Activated CD8-positive, alpha-beta memory T cell treated with anti-CD3 and anti-CD28 coated beads, Interleukin-2, amount 10 ng/mL, durations not matched to agents 7 days and 5 days (primary cell): ENCODE measurements at regions of chr1 and their contacts with region 1.

Region 1: GRCh38 chr1:200628223-200628881 is 7.8 kb upstream of the KIF14 start:
- DNase-seq: peak; percentile 75
- ATAC-seq: peak; percentile 75
- H3K4me3 Mint-ChIP-seq: peak overlapping the region; percentile 44
- H3K27ac Mint-ChIP-seq: peak overlapping the region; percentile 80
- H3K4me1 Mint-ChIP-seq: peaks cover 43% of the 10 kb centered on the region
- H3K27me3 Mint-ChIP-seq: peaks cover 9% of the 10 kb centered on the region

Region 2: GRCh38 chr1:200306944-200307754 is 321.2 kb before region 1 on chr1:
- CTCF ChIA-PET with region 1: no interaction called
- DNase-seq: no peak
- ATAC-seq: no peak
- H3K4me3 Mint-ChIP-seq: peak overlapping the region; percentile 45
- H3K27ac Mint-ChIP-seq: no peak overlapping the region
- H3K4me1 Mint-ChIP-seq: peaks cover 16% of the 10 kb centered on the region
- H3K27me3 Mint-ChIP-seq: peaks cover 31% of the 10 kb centered on the region

Region 3: GRCh38 chr1:200669314-200670241 is 41.2 kb after region 1 on chr1 and contains the start of gene DDX59:
- CTCF ChIA-PET with region 1: interaction called, 52 read pairs
- DNase-seq: peak; percentile 91
- ATAC-seq: peak; percentile 87
- H3K4me3 Mint-ChIP-seq: peak within 1 kb of the TSS; percentile 98
- H3K27ac Mint-ChIP-seq: peak within 1 kb of the TSS; percentile 94
- H3K4me1 Mint-ChIP-seq: peaks cover 44% of the 10 kb centered on the region
- H3K27me3 Mint-ChIP-seq: no peaks in the 10 kb centered on the region
- total RNA-seq, gene DDX59: 33.6 to 35.9 TPM

Region 4: GRCh38 chr1:200802865-200803512 is 174.6 kb after region 1 on chr1:
- CTCF ChIA-PET with region 1: interaction called, 75 read pairs
- DNase-seq: peak; percentile 82
- ATAC-seq: peak; percentile 86
- H3K4me3 Mint-ChIP-seq: no peak overlapping the region
- H3K27ac Mint-ChIP-seq: no peak overlapping the region
- H3K4me1 Mint-ChIP-seq: no peaks in the 10 kb centered on the region
- H3K27me3 Mint-ChIP-seq: peaks cover 38% of the 10 kb centered on the region

Region 5: DNA sequence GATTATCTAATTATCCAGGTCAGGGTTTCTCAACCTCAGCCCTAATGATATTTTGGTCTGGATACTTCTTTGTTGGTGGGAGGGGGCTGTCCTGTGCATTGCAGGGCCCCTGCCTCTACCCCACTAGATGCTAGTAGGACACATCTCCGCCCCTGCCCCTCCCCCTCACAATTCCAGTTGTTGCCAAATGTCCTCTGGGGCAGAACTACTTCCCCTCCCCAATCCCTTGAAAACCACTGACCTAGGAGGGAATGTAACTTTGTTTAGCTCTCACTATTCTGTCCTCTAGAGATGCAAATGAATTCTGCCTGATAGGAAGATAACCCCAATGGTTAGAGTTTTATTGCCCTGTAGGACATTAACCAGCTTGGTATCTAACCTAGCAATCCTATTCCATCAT is 475.8 kb after region 1 on chr1:
- CTCF ChIA-PET with region 1: no interaction called
- DNase-seq: no peak
- ATAC-seq: no peak
- H3K4me3 Mint-ChIP-seq: no peak overlapping the region
- H3K27ac Mint-ChIP-seq: no peak overlapping the region
- H3K4me1 Mint-ChIP-seq: no peaks in the 10 kb centered on the region
- H3K27me3 Mint-ChIP-seq: no peaks in the 10 kb centered on the region